Left cardiac atrium (tissue), 4 donors: ENCODE measurements at regions of chr17 and their contacts with region 1.

Region 1: GRCh38 chr17:79126139-79126538 is 51.5 kb downstream of the ENGASE start:
- DNase-seq: no peak
- ATAC-seq: peak in 1 of 2 donors; percentile 27

Region 2: DNA sequence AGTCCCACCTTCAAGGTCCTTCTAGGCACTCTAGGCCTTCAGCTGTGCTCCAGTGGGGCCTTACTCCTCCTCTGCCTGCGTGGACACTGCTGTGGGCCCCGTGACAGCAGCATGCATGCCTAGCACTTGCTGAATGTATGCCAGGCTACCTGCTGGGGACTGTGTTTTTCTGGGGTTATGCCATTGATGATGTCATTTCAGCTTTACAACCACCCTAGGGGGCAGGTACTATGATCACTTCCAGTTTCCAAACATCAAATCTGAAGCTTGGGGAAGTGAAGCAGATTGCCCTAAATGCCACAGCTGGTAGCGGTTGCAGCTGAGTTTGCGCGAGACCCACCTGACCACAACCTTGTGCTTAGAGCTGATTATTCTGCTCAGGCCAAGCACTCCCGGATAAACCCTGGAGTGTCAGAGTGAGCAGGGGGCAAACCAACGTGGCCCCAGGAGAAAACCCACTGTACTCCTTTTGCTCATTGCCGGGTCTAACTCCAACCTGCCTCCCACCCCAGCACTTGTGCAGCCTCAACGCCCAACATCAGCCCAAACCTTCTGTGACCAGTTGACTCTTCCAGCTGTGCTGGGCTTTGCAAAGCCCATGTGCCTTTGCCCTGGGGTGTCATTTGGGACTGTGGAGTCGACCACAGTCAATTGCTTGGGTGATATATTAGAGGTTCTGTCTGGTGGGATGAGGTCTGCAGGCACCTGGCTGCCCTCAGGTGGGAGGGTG is 116.9 kb after region 1 on chr17:
- intact Hi-C with region 1: loop called in 1 of 2 experiments (anchors 10 kb)
- DNase-seq: no peak
- ATAC-seq: no peak